Endothelial cell of umbilical vein (primary cell): ENCODE measurements at regions of chr9 and their contacts with region 1.

Region 1: GRCh38 chr9:75185585-75186170 is 97.4 kb downstream of the OSTF1 start:
- DNase-seq: peak; percentile 41
- H3K4me3 ChIP-seq: no peak overlapping the region
- H3K27ac ChIP-seq: no peak overlapping the region
- H3K4me1 ChIP-seq: peaks cover 5% of the 10 kb centered on the region
- H3K27me3 ChIP-seq: no peaks in the 10 kb centered on the region
- CTCF ChIP-seq: peak; percentile 60 to 66
- POLR2A ChIP-seq: no peak

Region 2: DNA sequence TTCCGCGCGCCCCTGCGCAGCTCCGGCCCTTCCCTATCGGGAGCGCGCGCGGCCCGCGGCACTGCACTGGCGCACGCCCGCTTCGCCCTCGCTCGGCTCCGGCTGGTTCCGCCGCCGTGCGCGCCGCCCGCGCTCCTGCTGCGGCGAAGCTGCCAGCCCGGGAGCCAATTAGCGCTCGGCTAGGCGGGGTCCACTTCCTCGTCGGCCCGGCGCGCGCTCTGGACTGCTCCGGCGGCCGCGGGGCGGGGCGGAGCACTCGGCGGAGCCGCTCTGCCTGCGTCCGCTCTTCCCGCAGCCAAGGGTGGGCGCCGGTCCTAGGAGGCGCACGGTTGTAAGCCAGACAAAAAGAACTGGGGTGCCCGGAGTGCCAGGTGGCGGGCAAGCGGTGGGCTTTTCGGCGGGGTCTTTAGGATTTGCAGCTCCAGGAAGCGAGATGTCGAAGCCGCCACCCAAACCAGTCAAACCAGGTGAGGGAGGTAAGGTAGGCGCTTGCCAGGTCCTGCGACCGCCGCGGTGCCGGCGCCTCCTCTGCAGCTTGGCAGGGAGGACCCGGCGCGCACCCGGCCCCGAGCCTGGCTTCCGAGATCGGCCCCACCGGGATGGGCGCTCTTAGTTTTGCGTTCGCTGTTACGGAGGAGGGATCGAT is 97.3 kb before region 1 on chr9 and contains the start of gene OSTF1:
- CTCF ChIA-PET with region 1: interaction called, 24 read pairs
- POLR2A ChIA-PET with region 1: interaction called, 6 read pairs
- dilution Hi-C with region 1: no loop called
- intact Hi-C with region 1: loop called (anchors 1 kb)
- DNase-seq: peak; percentile 97
- H3K4me3 ChIP-seq: peak within 1 kb of the TSS; percentile 79 to 90 (median 87)
- H3K27ac ChIP-seq: peak within 1 kb of the TSS; percentile 83
- H3K4me1 ChIP-seq: peaks cover 23% of the 10 kb centered on the region
- H3K27me3 ChIP-seq: no peaks in the 10 kb centered on the region
- CTCF ChIP-seq: no peak
- POLR2A ChIP-seq: no peak
- total RNA-seq, gene OSTF1: 70.9 and 73.6 TPM in 2 replicates

Region 3: DNA sequence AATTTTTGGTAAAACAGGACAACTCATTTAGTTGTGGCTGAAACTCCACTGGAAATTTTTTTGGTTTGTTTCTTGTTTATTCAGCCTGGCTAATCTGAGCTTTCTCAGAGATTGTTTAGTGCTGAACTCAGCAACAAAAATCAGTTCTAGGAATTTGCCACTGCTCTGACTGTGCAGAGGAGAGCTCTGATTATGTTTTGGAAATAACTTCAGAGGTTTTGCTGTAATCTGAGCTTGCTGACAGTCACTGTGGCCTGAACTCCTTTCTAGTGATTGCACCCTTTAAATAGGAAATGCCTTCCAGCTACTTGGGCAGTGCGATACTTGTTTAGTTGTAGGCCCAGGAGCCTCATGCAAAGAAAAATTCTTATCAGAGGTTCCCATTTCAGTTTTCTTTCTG is 37.1 kb before region 1 on chr9:
- CTCF ChIA-PET with region 1: interaction called, 14 read pairs
- POLR2A ChIA-PET with region 1: no interaction called
- dilution Hi-C with region 1: no loop called
- intact Hi-C with region 1: no loop called
- DNase-seq: peak; percentile 87
- H3K4me3 ChIP-seq: no peak overlapping the region
- H3K27ac ChIP-seq: peak overlapping the region; percentile 81
- H3K4me1 ChIP-seq: peaks cover 19% of the 10 kb centered on the region
- H3K27me3 ChIP-seq: no peaks in the 10 kb centered on the region
- CTCF ChIP-seq: no peak
- POLR2A ChIP-seq: no peak

Region 4: GRCh38 chr9:75170898-75171360 is 14.7 kb before region 1 on chr9:
- CTCF ChIA-PET with region 1: interaction called, 45 read pairs
- POLR2A ChIA-PET with region 1: no interaction called
- dilution Hi-C with region 1: no loop called
- intact Hi-C with region 1: no loop called
- DNase-seq: no peak
- H3K4me3 ChIP-seq: no peak overlapping the region
- H3K27ac ChIP-seq: no peak overlapping the region
- H3K4me1 ChIP-seq: peaks cover 33% of the 10 kb centered on the region
- H3K27me3 ChIP-seq: no peaks in the 10 kb centered on the region
- CTCF ChIP-seq: no peak
- POLR2A ChIP-seq: no peak

Region 5: GRCh38 chr9:75238311-75238978 is 52.8 kb after region 1 on chr9:
- CTCF ChIA-PET with region 1: interaction called, 6 read pairs
- POLR2A ChIA-PET with region 1: no interaction called
- dilution Hi-C with region 1: no loop called
- intact Hi-C with region 1: loop called (anchors 1 kb)
- DNase-seq: peak; percentile 71
- H3K4me3 ChIP-seq: no peak overlapping the region
- H3K27ac ChIP-seq: no peak overlapping the region
- H3K4me1 ChIP-seq: no peaks in the 10 kb centered on the region
- H3K27me3 ChIP-seq: peaks cover 0 to 3% of the 10 kb centered on the region in 2 experiments
- CTCF ChIP-seq: peak; percentile 54 to 57
- POLR2A ChIP-seq: no peak